ENCODE measurements at regions of chr3 and their contacts with region 1.

Region 1: GRCh38 chr3:143951351-143951971 is 20.2 kb upstream of the DIPK2A start:
- DNase-seq: peak; percentile 54
- ATAC-seq: no peak
- H3K4me3 ChIP-seq: no peak overlapping the region
- H3K27ac ChIP-seq: no peak overlapping the region
- H3K4me1 ChIP-seq: no peaks in the 10 kb centered on the region
- H3K27me3 ChIP-seq: no peaks in the 10 kb centered on the region
- CTCF ChIP-seq: peak; percentile 75

Region 2: DNA sequence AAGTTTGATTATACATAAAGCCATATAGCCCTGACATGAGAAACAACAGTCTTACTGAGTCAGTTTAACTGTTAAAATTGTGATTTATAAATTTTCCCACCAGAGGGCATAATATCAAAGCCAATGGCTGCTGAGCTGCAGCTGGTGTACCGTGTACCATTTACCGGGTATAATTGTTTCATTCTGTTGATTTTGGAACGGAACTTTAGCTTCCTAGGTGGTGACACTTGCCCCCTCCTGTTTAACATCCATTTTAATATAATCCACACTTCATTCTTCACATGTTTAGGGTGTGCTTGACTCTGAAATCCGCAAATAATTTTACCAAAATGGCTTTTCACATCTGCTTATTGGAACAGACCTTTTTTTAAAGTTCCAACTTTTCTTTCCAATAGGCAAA is 176.0 kb before region 1 on chr3:
- CTCF ChIA-PET with region 1: no interaction called
- POLR2A ChIA-PET with region 1: no interaction called
- intact Hi-C with region 1: loop called (anchors 1 kb)
- DNase-seq: peak; percentile 61
- ATAC-seq: peak; percentile 77
- H3K4me3 ChIP-seq: no peak overlapping the region
- H3K27ac ChIP-seq: no peak overlapping the region
- H3K4me1 ChIP-seq: no peaks in the 10 kb centered on the region
- H3K27me3 ChIP-seq: no peaks in the 10 kb centered on the region
- CTCF ChIP-seq: peak; percentile 66

Region 3: GRCh38 chr3:143895805-143896204 is 55.7 kb before region 1 on chr3:
- CTCF ChIA-PET with region 1: no interaction called
- POLR2A ChIA-PET with region 1: no interaction called
- intact Hi-C with region 1: loop called (anchors 1 kb)
- DNase-seq: peak; percentile 40
- ATAC-seq: no peak
- H3K4me3 ChIP-seq: no peak overlapping the region
- H3K27ac ChIP-seq: no peak overlapping the region
- H3K4me1 ChIP-seq: peaks cover 3% of the 10 kb centered on the region
- H3K27me3 ChIP-seq: no peaks in the 10 kb centered on the region
- CTCF ChIP-seq: peak; percentile 52; the same call in 1 of the 2 replicates

Region 4: GRCh38 chr3:144499001-144499745 is 547.7 kb after region 1 on chr3:
- CTCF ChIA-PET with region 1: no interaction called
- POLR2A ChIA-PET with region 1: no interaction called
- intact Hi-C with region 1: no loop called
- DNase-seq: peak; percentile 41
- ATAC-seq: peak; percentile 51
- H3K4me3 ChIP-seq: no peak overlapping the region
- H3K27ac ChIP-seq: no peak overlapping the region
- H3K4me1 ChIP-seq: no peaks in the 10 kb centered on the region
- H3K27me3 ChIP-seq: no peaks in the 10 kb centered on the region
- CTCF ChIP-seq: no peak